ENCODE measurements at regions of chr1 and their contacts with region 1.

Region 1: GRCh38 chr1:2194898-2195673 is 514 bp upstream of the FAAP20 start:
- DNase-seq: peak; percentile 98
- H3K4me3 ChIP-seq: peak overlapping the region; percentile 54 to 92 (median 70)
- H3K27ac ChIP-seq: peak overlapping the region; percentile 86 to 97 (median 94)
- H3K4me1 ChIP-seq: peaks cover 25 to 82% (median 58%) of the 10 kb centered on the region in 6 donors
- H3K27me3 ChIP-seq: no peaks in the 10 kb centered on the region
- CTCF ChIP-seq: peak; percentile 91 to 98 (median 96)
- POLR2A ChIP-seq: no peak

Region 2: GRCh38 chr1:2314803-2315673 is 120.0 kb after region 1 on chr1:
- intact Hi-C with region 1: loop called (anchors 5 kb)
- DNase-seq: peak; percentile 91
- H3K4me3 ChIP-seq: peak overlapping the region; percentile 37 to 76 (median 52)
- H3K27ac ChIP-seq: peak overlapping the region; percentile 78 to 96 (median 90)
- H3K4me1 ChIP-seq: peaks cover 33 to 90% (median 68%) of the 10 kb centered on the region in 6 donors
- H3K27me3 ChIP-seq: peaks cover 0 to 37% (median 0%) of the 10 kb centered on the region in 7 donors
- CTCF ChIP-seq: peak; percentile 62 to 100 (median 96)
- POLR2A ChIP-seq: no peak

Region 3: GRCh38 chr1:2381741-2382620 is 186.9 kb after region 1 on chr1:
- intact Hi-C with region 1: loop called (anchors 2 kb)
- DNase-seq: peak; percentile 95
- H3K4me3 ChIP-seq: no peak overlapping the region
- H3K27ac ChIP-seq: peak overlapping the region in 2 of 8 donors; percentile 27 to 43
- H3K4me1 ChIP-seq: peaks cover 0 to 32% (median 15%) of the 10 kb centered on the region in 6 donors
- H3K27me3 ChIP-seq: no peaks in the 10 kb centered on the region
- CTCF ChIP-seq: peak; percentile 87 to 96 (median 93)
- POLR2A ChIP-seq: no peak

Region 4: GRCh38 chr1:2545759-2546514 is 350.9 kb after region 1 on chr1:
- intact Hi-C with region 1: loop called (anchors 5 kb)
- DNase-seq: peak; percentile 97
- H3K4me3 ChIP-seq: peak overlapping the region; percentile 59 to 93 (median 86)
- H3K27ac ChIP-seq: peak overlapping the region; percentile 92 to 99 (median 98)
- H3K4me1 ChIP-seq: peaks cover 30 to 100% (median 82%) of the 10 kb centered on the region in 6 donors
- H3K27me3 ChIP-seq: peaks cover 0 to 28% (median 6%) of the 10 kb centered on the region in 7 donors
- CTCF ChIP-seq: peak in 1 of 11 experiments; percentile 19
- POLR2A ChIP-seq: peak; percentile 70 to 95 (median 89)

Measured in spleen (tissue), 13 donors.